ENCODE measurements at regions of chr3 and their contacts with region 1.

Region 1: GRCh38 chr3:114408736-114409670 is 115.2 kb downstream of the TIGIT start:
- DNase-seq: peak; percentile 13
- ATAC-seq: peak; percentile 69
- H3K4me3 Mint-ChIP-seq: peak overlapping the region; percentile 38; the same call in 1 of the 2 replicates
- H3K27ac Mint-ChIP-seq: no peak overlapping the region
- H3K4me1 Mint-ChIP-seq: peaks cover 62% of the 10 kb centered on the region
- H3K27me3 Mint-ChIP-seq: no peaks in the 10 kb centered on the region
- CTCF ChIP-seq: no peak

Region 2: DNA sequence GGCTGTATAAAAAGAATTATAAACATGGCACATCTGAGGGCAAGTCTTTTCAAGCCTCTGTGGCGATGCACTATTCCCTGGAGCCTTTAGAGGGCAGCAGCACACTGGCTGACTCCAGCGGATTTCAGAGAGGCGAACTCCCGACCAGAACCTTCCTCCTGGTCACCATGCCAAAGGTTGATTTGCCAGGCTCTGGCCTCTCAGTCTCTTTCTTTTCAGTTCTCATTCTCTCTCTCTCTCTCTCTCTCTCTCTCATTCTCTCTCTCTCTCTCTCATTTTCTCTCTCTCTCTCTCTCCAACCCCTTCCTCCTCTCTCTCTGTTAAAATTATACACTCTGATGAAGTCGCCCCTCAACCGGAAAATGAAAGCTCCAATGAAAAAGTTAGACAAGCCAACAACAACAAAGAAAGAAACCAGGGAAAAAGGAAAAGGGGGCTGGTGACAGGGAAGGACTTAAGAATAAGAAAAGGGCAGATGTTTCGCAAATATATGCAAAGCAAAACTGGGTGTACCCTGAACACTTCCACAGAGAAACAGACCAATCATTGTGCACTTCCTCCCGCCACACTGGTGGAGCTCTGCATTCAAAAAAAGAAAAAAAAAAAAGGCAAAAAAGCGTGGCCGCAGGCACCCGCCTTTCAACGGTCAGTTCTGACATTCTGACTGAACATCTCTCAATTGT is 25.0 kb before region 1 on chr3:
- CTCF ChIA-PET with region 1: interaction called, 18 read pairs
- POLR2A ChIA-PET with region 1: no interaction called
- DNase-seq: peak; percentile 77
- ATAC-seq: peak; percentile 95
- H3K4me3 Mint-ChIP-seq: no peak overlapping the region
- H3K27ac Mint-ChIP-seq: no peak overlapping the region
- H3K4me1 Mint-ChIP-seq: peaks cover 7% of the 10 kb centered on the region
- H3K27me3 Mint-ChIP-seq: no peaks in the 10 kb centered on the region
- CTCF ChIP-seq: peak; percentile 76

Region 3: DNA sequence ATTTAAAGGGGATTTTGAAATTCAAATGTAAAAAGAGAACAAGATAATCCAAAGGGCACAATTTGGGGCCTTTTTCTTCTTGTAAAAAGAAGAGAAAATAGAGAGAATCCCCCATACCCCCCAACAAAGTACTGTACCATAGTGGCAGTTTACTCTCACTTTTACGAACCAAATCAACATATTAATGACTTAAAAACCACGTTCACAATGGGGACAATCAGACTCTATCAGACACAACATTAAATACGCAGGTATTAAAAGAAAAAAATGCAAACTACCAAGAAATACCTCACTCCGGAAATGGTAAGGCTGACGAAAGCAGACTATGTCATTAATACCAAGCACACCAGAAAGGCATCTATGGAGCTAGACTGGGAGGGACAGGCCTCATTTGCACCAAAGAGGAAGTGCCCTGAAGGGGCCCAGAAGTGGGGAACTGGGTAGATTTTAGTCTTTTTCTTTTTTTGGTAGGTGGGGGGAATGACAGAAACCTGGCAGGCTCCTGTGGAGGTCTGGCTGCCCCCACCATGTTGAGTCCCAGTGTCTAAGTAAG is 19.1 kb after region 1 on chr3:
- CTCF ChIA-PET with region 1: no interaction called
- POLR2A ChIA-PET with region 1: no interaction called
- DNase-seq: no peak
- ATAC-seq: no peak
- H3K4me3 Mint-ChIP-seq: no peak overlapping the region
- H3K27ac Mint-ChIP-seq: no peak overlapping the region
- H3K4me1 Mint-ChIP-seq: peaks cover 23% of the 10 kb centered on the region
- H3K27me3 Mint-ChIP-seq: no peaks in the 10 kb centered on the region
- CTCF ChIP-seq: no peak

Region 4: GRCh38 chr3:114447545-114447944 is 38.5 kb after region 1 on chr3:
- CTCF ChIA-PET with region 1: interaction called, 10 read pairs
- POLR2A ChIA-PET with region 1: no interaction called
- DNase-seq: no peak
- ATAC-seq: peak; percentile 64
- H3K4me3 Mint-ChIP-seq: no peak overlapping the region
- H3K27ac Mint-ChIP-seq: no peak overlapping the region
- H3K4me1 Mint-ChIP-seq: peaks cover 29% of the 10 kb centered on the region
- H3K27me3 Mint-ChIP-seq: no peaks in the 10 kb centered on the region
- CTCF ChIP-seq: no peak

Region 5: GRCh38 chr3:114480442-114480841 is 71.4 kb after region 1 on chr3:
- CTCF ChIA-PET with region 1: no interaction called
- POLR2A ChIA-PET with region 1: no interaction called
- DNase-seq: no peak
- ATAC-seq: no peak
- H3K4me3 Mint-ChIP-seq: no peak overlapping the region
- H3K27ac Mint-ChIP-seq: no peak overlapping the region
- H3K4me1 Mint-ChIP-seq: 0 out of 2 replicates have a peak, but pooled peaks cover 2% of the 10 kb centered on the region
- H3K27me3 Mint-ChIP-seq: no peaks in the 10 kb centered on the region
- CTCF ChIP-seq: no peak

Measured in WTC11 (cell line).